ENCODE measurements at regions of chr7 and their contacts with region 1.

Region 1: DNA sequence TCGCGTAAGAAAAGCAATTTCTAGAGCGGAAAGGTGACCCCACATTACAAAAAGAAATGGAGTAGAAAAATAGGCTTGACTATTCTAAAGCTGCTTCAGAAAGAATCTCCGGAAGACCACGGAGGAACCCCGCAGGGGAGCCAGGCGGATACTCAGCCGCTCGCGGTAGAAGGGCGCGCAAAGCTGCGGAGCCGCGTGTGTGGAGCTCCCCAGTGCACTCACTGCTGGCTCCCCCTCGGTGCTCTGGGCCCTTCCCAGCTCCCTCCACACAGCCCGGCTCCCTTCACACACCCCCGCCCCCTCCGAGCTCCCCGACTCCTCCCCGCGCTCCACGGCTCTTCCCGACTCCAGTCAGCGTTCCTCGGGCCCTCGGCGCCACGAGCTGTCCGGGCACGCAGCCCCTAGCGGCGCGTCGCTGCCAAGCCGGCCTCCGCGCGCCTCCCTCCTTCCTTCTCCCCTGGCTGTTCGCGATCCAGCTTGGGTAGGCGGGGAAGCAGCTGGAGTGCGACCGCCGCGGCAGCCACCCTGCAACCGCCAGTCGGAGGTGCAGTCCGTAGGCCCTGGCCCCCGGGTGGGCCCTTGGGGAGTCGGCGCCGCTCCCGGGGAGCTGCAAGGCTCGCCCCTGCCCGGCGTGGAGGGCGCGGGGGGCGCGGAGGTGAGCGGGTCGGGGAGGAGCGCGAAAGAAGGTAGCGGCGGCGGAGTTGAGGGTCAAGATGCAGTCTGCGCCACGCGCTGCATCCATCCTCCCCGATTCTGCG is at the start of gene STEAP2:
- DNase-seq: peak; percentile 53
- H3K4me3 ChIP-seq: peak within 1 kb of the TSS; percentile 68
- CTCF ChIP-seq: peak; percentile 95

Region 2: DNA sequence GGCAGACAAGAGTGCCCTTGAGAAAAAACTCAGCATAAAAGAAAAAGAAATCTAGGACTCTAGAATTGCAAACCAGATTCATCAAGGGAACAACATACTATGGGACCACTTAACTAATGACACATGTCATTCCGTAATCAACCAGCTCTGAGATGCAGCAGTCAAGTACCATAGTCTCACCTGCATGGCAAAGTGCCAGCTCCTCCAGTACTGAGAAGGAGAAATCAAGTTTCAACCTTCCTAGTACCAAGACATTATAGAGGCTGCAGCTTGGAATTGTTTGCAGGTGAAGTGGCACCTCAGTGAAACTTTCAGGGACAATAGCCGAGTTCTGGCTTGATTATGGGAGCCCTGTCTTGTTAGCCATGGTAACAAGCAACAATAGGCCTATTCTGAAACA is 45.8 kb before region 1 on chr7:
- CTCF ChIA-PET with region 1: interaction called, 15 read pairs
- POLR2A ChIA-PET with region 1: no interaction called
- DNase-seq: no peak
- H3K4me3 ChIP-seq: no peak overlapping the region
- CTCF ChIP-seq: no peak

Region 3: DNA sequence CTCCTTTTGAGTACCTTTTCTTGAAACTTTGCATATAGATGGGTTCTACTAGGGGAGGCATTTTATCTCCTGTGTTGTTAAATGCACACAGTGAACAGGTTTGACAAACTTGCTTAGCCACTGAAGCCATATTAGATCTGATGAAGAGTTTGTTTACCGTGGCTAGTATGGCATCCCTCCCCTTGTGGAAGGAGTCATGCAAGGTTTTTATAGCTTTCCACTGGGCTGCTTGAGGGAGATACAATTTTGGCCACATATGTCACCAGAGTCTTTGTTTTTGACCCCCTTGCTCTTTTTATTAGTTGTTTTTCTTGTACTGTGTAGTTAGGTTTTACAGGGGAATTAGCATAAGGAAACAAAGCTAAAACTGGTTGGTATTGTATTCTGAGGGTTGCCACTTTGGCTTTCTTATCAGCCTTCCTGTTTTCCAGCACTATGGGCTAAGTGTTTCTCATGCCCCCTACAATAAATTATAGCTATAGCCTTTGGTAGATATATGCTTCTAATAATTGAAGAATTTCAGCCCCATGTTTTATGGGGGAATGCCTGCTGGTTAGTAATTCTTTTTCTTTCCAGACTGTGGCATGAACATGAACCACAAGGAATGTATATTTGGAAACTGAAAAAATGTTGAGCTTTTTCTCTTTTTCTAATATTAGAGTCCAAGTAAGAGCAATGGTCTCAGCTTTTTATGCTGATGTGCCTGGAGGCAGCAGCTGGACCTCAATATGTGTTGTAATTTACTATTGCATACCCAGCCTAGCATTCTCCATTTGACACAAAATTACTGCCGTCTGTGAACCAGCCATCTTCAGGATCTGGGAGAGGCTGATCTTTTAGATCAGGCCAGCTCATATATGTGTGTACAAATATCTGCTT is 18.5 kb before region 1 on chr7:
- CTCF ChIA-PET with region 1: interaction called, 32 read pairs
- POLR2A ChIA-PET with region 1: interaction called, 9 read pairs
- DNase-seq: peak; percentile 50
- H3K4me3 ChIP-seq: no peak overlapping the region
- CTCF ChIP-seq: no peak

Region 4: GRCh38 chr7:90224195-90224594 is 12.6 kb after region 1 on chr7:
- CTCF ChIA-PET with region 1: interaction called, 20 read pairs
- POLR2A ChIA-PET with region 1: interaction called, 3 read pairs
- DNase-seq: no peak
- H3K4me3 ChIP-seq: no peak overlapping the region
- CTCF ChIP-seq: no peak

Region 5: GRCh38 chr7:90242369-90243168 is 31.0 kb after region 1 on chr7:
- CTCF ChIA-PET with region 1: interaction called, 12 read pairs
- POLR2A ChIA-PET with region 1: no interaction called
- DNase-seq: no peak
- H3K4me3 ChIP-seq: no peak overlapping the region
- CTCF ChIP-seq: no peak

Region 6: GRCh38 chr7:90262438-90262837 is 50.9 kb after region 1 on chr7:
- CTCF ChIA-PET with region 1: interaction called, 12 read pairs
- POLR2A ChIA-PET with region 1: no interaction called
- DNase-seq: no peak
- H3K4me3 ChIP-seq: no peak overlapping the region
- CTCF ChIP-seq: no peak